ENCODE measurements at regions of chr12 and their contacts with region 1.

Region 1: DNA sequence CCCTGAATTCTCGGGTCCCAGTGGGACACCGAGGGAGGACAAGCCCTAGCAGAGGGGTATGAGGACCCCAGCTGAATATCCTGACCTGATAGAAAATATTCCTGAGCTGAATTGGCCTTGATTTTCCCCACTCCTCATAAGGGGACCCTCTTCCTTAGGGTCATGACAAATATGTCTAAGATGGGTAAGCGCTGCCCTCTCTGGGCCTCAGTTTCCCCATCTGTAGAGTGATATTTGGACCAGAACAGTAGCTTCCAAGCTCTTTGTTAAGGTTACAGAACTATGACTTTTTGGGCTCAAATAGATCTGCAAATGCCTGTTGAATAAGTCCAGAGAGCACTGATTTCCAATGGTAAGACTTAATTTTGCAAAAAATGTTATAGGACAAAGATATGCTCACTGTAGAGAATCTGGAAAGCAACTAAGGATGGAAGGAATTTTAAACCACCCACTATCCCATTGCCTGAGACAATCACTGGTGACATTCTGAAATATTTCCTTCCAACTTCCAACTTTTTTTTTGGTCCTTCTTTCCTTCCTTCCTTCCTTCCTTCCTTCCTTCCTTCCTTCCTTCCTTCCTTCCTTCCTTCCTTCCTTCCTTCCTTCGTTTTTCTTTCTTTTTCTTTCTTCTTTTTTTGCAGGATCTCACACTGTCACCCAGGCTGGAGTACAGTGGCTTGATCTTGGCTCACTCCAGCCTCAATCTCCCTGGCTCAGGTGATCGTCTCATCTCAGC is 32.0 kb downstream of the MYL2 start:
- DNase-seq: no peak
- ATAC-seq: no peak

Region 2: GRCh38 chr12:110449799-110450497 is 438.5 kb before region 1 on chr12 and contains the start of gene ARPC3:
- intact Hi-C with region 1: loop called (anchors 1 kb)
- DNase-seq: peak; percentile 98
- ATAC-seq: peak; percentile 99
- total RNA-seq, gene ARPC3: 94.4 TPM

Region 3: DNA sequence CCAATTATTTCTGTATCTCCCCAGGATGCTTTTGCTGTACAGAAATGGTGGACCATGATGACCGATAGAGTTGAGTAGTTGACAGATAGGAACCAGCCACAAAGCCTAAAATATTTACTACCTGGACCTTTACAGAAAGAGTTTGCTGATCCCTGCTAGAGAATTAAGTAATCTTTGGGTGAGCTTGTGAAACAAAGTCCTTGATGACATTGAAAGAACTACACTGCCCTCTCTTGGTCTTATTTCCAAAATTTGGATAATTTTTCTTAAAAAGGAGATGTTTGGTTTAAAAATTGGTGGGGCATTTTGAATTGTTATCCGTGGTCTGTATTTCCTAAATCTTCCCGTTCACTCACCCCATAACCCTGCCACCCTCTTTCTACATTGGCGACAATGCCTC is 288.2 kb before region 1 on chr12:
- intact Hi-C with region 1: loop called (anchors 5 kb)
- DNase-seq: no peak
- ATAC-seq: peak; percentile 51

Region 4: DNA sequence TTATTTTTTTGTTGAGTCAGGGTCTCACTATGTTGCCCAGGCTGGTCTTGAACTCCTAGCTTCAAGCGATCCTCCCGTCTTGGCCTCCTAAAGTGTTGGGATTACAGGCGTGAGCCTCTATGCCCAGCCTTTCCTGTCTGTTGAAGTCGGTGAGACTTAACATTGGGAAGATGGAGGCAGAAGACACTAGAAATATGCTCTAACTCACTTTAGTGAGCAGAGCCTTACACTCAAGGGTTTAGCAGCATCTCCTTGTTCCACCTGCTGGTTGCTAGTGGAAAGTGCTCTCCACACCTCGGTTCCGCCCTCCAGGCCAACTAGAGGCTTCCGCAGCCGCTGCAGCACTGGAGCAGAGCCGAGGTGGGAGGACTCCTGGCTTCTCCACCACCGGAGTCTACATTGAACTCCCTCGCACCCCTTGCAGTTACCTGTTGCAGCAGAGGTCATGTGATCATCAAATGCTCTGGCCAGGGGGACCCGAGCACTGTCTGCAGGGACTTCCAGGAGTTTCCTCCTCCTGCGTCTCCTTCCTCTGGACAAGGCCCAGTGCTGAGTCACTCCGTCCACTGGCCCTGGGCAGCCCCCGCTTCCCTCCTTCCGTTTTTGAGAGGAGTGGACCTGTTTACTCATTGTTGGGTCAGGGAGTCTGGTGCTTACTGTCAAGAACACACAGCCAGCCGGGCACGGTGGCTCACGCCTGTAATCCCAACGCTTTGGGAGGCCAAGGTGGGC is 190.1 kb before region 1 on chr12:
- intact Hi-C with region 1: loop called (anchors 5 kb)
- DNase-seq: peak; percentile 89
- ATAC-seq: peak; percentile 84

Region 5: GRCh38 chr12:110742718-110743570 is 145.5 kb before region 1 on chr12 and contains the start of gene PPP1CC:
- intact Hi-C with region 1: loop called (anchors 5 kb)
- DNase-seq: peak; percentile 98
- ATAC-seq: peak; percentile 97
- total RNA-seq, gene PPP1CC: 163 TPM

Region 6: DNA sequence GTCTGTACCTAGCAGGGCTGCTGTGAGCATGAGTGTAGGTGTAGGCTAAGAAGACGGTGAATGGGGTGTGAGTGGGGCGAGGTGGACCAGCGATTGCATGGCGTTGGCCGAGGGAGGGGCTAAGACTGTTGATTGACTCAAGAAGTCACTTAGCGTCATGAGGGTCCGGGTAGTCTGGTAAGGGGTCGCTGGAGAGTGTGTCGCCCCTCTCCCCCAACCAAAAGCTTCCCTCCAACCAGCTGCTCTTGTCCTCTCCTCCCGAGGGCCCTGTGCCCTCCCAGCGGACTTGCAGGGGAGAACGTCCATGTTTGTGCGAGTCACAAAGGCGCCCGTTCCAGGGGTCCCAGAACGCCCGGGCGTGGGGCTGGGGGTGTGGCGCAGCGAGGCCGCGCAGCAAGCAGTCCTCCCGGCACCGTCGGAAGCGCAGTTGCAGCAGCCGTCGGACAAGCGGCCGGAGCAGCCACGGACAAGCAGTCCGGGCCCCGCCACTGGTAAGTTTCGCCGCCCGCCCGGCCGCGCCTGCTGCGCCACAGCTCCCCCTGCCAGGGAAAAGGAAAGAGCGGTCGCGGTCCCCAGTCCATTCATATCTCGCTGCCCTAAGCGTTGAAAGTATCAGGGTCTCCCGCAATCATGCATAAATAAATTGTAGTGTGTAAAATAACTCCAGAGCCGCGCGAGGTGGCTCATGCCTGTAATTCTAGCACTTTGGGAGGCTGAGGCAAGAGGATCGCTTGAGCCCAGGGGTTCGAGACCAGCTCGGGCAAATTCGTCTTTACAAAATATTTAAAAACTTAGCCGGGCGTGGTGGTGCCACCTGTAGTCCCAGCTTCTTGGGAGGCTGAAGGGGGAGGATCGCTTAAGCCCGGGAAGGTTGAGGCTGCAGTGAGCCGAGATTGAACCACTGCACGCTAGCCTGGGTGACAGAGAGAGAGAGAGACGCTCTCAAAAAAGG is 41.5 kb before region 1 on chr12 and contains the start of gene CCDC63:
- intact Hi-C with region 1: loop called (anchors 5 kb)
- DNase-seq: peak; percentile 77
- ATAC-seq: peak; percentile 35
- total RNA-seq, gene CCDC63: not detected

Region 7: DNA sequence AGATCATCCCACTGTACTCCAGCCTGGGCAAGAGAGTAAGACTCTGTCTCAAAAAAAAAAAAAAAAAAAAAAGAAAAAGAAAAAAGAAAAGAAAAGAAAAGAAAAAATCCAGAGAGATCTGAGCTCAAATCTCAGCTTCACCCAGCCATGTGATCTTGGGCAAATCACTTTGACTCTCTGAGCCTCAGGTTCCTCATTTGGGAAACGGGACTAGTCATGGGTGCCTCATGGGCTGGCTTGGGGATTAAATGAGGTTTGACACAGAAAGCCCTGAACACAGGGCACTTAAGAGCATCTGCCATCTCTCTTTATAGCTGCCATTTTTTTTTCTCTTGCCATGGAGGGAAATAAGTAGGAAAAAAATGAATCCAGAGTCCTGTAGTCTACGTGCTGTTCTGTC is 118.2 kb after region 1 on chr12:
- intact Hi-C with region 1: no loop called
- DNase-seq: no peak
- ATAC-seq: no peak

Measured in Right ventricle myocardium inferior (tissue), 1 donor.